ENCODE measurements at regions of chr3 and their contacts with region 1.

Region 1: DNA sequence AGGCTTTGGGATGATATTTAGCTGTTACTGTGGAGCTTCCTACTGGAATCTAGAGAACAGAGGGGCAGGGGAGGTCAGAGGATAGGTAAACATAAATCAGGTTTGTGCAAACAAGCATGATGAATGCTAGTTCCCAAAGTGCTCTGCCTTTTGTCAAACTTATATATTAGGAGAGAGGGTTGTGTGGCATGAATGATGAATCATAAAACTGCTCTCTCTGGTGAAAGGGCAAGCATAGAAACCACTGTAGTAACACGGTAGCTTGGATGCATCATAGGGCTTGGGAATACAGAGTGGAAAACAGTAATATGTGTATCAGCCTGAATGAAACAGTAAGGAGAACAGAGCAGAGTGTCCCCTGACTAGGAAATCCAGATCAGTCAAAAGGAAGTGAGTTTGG is 486.7 kb downstream of the IL5RA start:
- DNase-seq: no peak
- ATAC-seq: no peak
- H3K4me3 ChIP-seq: no peak overlapping the region
- H3K4me3 Mint-ChIP-seq: no peak overlapping the region
- H3K27ac ChIP-seq: no peak overlapping the region
- H3K27ac Mint-ChIP-seq: no peak overlapping the region
- H3K4me1 ChIP-seq: no peaks in the 10 kb centered on the region
- H3K4me1 Mint-ChIP-seq: no peaks in the 10 kb centered on the region
- H3K27me3 ChIP-seq: no peaks in the 10 kb centered on the region
- H3K27me3 Mint-ChIP-seq: peaks cover 0 to 1% of the 10 kb centered on the region in 2 donors

Region 2: DNA sequence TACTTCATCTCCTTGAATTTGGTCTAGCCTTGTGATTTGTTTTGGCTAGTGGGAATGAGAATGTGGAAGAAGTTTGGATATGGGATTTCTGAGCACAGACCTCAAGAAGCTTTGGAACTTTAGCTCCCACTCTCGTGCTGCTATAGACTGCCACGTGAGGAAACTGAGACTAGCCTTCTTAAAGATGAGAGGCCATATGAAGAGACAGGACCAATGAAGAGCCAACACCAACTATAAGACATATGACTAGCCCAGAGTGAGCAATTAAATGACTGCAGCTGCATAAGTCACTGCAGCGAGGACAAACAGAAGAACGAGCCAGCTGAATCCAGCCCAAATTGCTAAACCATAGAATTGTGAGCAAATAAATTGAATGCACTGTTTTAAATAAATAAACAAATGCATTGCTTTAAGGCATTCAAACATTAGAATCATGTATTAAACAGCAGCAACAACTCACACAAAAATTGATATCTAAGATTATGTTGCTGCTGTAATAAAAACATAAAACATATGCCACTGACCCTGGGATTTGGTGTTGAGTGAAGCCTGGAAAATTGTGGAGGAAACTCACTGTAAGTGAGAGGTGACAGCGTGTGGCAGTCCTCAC is 540.5 kb before region 1 on chr3:
- CTCF ChIA-PET with region 1: no interaction called
- POLR2A ChIA-PET with region 1: no interaction called
- DNase-seq: no peak
- ATAC-seq: no peak
- H3K4me3 ChIP-seq: no peak overlapping the region
- H3K4me3 Mint-ChIP-seq: no peak overlapping the region
- H3K27ac ChIP-seq: no peak overlapping the region
- H3K27ac Mint-ChIP-seq: no peak overlapping the region
- H3K4me1 ChIP-seq: no peaks in the 10 kb centered on the region
- H3K4me1 Mint-ChIP-seq: no peaks in the 10 kb centered on the region
- H3K27me3 ChIP-seq: no peaks in the 10 kb centered on the region
- H3K27me3 Mint-ChIP-seq: no peaks in the 10 kb centered on the region

Region 3: DNA sequence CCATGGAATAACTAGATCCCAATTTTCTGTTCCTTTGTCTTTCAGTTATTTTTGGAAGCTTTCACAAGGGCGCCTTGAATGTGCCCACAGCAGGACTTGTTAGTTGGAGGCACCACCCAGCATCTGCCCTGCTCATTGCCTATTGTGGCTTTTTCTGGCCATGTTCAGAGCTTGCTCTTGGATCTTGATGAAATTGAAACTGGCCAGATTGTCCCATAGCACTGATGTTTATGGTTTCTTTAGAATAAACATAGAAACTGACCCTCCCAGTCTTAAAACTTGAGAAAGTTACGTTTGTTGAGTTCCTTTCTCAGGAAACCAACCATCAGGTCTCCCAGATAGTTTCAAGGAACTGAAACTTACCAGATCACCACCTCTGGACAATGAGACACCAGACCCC is 12.1 kb after region 1 on chr3:
- CTCF ChIA-PET with region 1: interaction called, 4 to 11 read pairs
- POLR2A ChIA-PET with region 1: no interaction called
- DNase-seq: no peak
- ATAC-seq: no peak
- H3K4me3 ChIP-seq: no peak overlapping the region
- H3K4me3 Mint-ChIP-seq: no peak overlapping the region
- H3K27ac ChIP-seq: no peak overlapping the region
- H3K27ac Mint-ChIP-seq: no peak overlapping the region
- H3K4me1 ChIP-seq: no peaks in the 10 kb centered on the region
- H3K4me1 Mint-ChIP-seq: no peaks in the 10 kb centered on the region
- H3K27me3 ChIP-seq: no peaks in the 10 kb centered on the region
- H3K27me3 Mint-ChIP-seq: peaks cover 0 to 11% of the 10 kb centered on the region in 2 donors

Measured in T-cell (primary cell).